Caco-2 (cell line): ENCODE measurements at regions of chr5 and their contacts with region 1.

Region 1: DNA sequence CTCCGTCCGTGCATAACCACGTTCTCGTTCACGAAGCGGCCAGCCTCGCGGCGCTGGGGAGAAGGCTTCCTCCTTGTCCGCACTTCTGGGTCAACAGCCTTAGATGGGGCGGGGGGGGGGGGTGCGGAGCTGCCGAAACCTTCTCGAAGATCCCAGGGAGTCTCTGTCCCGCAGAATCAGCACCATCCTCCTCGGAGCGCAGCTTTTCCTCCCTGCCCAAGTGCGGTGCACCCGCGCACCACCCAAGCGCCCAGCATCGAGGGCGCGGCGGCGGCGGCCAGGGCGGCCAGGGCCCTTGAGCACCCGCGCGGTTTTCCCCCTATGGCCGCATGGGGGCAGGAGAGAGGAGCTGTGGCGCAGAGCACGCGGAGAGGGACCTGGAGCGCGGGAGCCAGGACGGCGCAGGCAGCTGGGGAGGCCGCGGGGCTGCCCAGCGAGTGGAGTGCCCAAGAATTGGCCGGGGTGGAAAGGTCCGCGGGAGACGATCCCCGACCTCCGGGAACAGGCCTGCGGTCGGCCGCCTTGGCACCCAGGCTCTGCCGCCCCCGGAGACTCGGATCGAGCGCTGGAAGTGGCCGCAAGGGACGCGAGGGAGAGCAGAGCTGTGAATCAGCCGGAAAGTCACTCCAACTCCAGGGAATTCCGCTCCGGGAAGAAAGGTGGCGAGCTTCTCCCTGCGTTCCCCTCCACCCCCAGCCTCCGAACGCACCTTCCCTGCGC is 43.1 kb downstream of the TMEM174 start:
- DNase-seq: peak; percentile 80 to 87
- H3K4me3 ChIP-seq: peak overlapping the region; percentile 41
- H3K4me3 Mint-ChIP-seq: peak overlapping the region; percentile 79
- H3K27ac Mint-ChIP-seq: peak overlapping the region; percentile 55
- H3K4me1 ChIP-seq: no peaks in the 10 kb centered on the region
- H3K4me1 Mint-ChIP-seq: peaks cover 6% of the 10 kb centered on the region
- H3K27me3 ChIP-seq: no peaks in the 10 kb centered on the region; the same call in 1 of the 2 replicates
- H3K27me3 Mint-ChIP-seq: peaks cover 3% of the 10 kb centered on the region
- CTCF ChIP-seq: peak; percentile 85 to 86

Region 2: GRCh38 chr5:72920690-72921502 is 295.2 kb before region 1 on chr5:
- CTCF ChIA-PET with region 1: interaction called, 6 read pairs
- POLR2A ChIA-PET with region 1: no interaction called
- intact Hi-C with region 1: loop called (anchors 1 kb)
- DNase-seq: peak in 1 of 2 experiments; percentile 11
- H3K4me3 ChIP-seq: no peak overlapping the region
- H3K4me3 Mint-ChIP-seq: no peak overlapping the region
- H3K27ac Mint-ChIP-seq: no peak overlapping the region
- H3K4me1 ChIP-seq: no peaks in the 10 kb centered on the region
- H3K4me1 Mint-ChIP-seq: no peaks in the 10 kb centered on the region
- H3K27me3 ChIP-seq: no peaks in the 10 kb centered on the region
- H3K27me3 Mint-ChIP-seq: no peaks in the 10 kb centered on the region
- CTCF ChIP-seq: peak; percentile 25 to 28

Region 3: GRCh38 chr5:73229209-73229661 is 13.2 kb after region 1 on chr5:
- CTCF ChIA-PET with region 1: interaction called, 14 read pairs
- POLR2A ChIA-PET with region 1: no interaction called
- intact Hi-C with region 1: no loop called
- DNase-seq: peak in 1 of 2 experiments; percentile 45
- H3K4me3 ChIP-seq: no peak overlapping the region
- H3K4me3 Mint-ChIP-seq: no peak overlapping the region
- H3K27ac Mint-ChIP-seq: no peak overlapping the region
- H3K4me1 ChIP-seq: no peaks in the 10 kb centered on the region
- H3K4me1 Mint-ChIP-seq: no peaks in the 10 kb centered on the region
- H3K27me3 ChIP-seq: no peaks in the 10 kb centered on the region
- H3K27me3 Mint-ChIP-seq: no peaks in the 10 kb centered on the region
- CTCF ChIP-seq: no peak

Region 4: DNA sequence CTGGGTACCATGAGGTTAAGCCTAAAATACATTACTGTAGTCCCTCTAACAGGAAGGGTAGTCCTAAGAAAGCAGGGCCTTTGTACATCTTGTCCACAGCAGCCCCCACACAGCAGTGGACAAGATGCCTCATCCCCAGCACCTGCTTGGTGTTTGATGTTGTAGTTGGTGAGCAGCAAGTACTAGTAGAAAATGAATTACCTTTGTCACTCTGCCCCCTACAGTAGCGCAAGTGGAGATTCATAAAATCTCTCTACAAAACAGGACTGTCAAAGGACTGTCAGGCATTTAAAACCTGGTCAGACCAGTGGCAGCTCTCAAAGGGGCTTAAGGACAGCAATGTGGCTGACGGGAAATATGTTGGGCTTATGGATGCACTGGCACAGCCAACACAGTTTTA is 79.4 kb after region 1 on chr5:
- CTCF ChIA-PET with region 1: interaction called, 23 read pairs
- POLR2A ChIA-PET with region 1: interaction called, 3 read pairs
- intact Hi-C with region 1: loop called (anchors 1 kb)
- DNase-seq: no peak
- H3K4me3 ChIP-seq: no peak overlapping the region
- H3K4me3 Mint-ChIP-seq: no peak overlapping the region
- H3K27ac Mint-ChIP-seq: no peak overlapping the region
- H3K4me1 ChIP-seq: no peaks in the 10 kb centered on the region
- H3K4me1 Mint-ChIP-seq: no peaks in the 10 kb centered on the region
- H3K27me3 ChIP-seq: no peaks in the 10 kb centered on the region
- H3K27me3 Mint-ChIP-seq: peaks cover 9% of the 10 kb centered on the region
- CTCF ChIP-seq: peak in 1 of 2 experiments; percentile 46

Region 5: GRCh38 chr5:73454351-73455036 is 238.4 kb after region 1 on chr5:
- CTCF ChIA-PET with region 1: interaction called, 29 read pairs
- POLR2A ChIA-PET with region 1: interaction called, 4 read pairs
- intact Hi-C with region 1: loop called (anchors 1 kb)
- DNase-seq: peak; percentile 81 to 83
- H3K4me3 ChIP-seq: no peak overlapping the region
- H3K4me3 Mint-ChIP-seq: no peak overlapping the region
- H3K27ac Mint-ChIP-seq: no peak overlapping the region
- H3K4me1 ChIP-seq: peaks cover 4% of the 10 kb centered on the region; the same call in 1 of the 2 replicates
- H3K4me1 Mint-ChIP-seq: no peaks in the 10 kb centered on the region
- H3K27me3 ChIP-seq: peaks cover 3% of the 10 kb centered on the region
- H3K27me3 Mint-ChIP-seq: peaks cover 15% of the 10 kb centered on the region
- CTCF ChIP-seq: peak; percentile 84 to 92